PC-9 (cell line): ENCODE measurements at regions of chr11 and their contacts with region 1.

Region 1: GRCh38 chr11:62726915-62727763 is at the start of gene HNRNPUL2:
- DNase-seq: peak; percentile 98 to 99
- H3K4me3 ChIP-seq: peak within 1 kb of the TSS; percentile 84
- H3K27ac ChIP-seq: peak within 1 kb of the TSS; percentile 76
- H3K4me1 ChIP-seq: peaks cover 26% of the 10 kb centered on the region
- H3K27me3 ChIP-seq: no peaks in the 10 kb centered on the region
- CTCF ChIP-seq: no peak
- total RNA-seq, gene HNRNPUL2: 55.2 and 76.9 TPM in 2 replicates

Region 2: DNA sequence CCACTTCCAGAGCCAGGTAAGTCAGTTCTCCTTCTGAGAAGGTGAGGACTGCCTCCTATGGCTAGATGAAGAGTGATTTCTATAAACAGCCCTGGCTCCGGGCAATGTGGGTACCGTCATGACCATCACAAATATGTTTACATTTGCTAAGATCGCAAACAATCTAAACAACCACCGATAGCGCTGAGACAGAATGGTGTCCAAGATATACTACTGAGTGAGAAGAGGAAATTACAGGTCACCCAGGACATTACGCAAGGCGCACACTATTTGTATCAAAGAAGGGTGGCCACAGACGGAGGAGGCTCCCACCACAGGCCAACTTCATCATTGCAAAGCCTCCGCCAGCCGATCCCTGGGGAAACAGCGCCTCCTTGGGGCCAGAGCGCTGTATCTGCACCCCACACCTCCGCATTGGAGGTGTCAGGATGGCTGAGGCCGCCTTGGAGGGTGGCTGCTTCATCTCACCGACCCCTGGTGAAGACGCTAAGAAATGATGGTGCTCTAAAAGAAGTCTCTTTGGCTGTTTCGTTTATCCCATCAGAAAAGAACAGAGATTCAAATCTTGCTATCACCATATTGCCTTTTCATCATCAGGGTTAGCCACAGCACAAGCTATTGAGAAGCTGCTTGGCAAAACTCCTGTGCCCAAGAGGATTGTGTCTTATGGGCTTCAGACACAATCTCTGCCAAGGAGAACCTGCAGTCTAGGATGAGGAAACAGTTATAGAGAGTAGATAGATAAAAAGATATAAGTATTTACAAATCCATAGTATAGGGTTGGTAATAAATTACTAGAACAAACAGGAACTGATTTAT is 402.2 kb before region 1 on chr11:
- CTCF ChIA-PET with region 1: no interaction called
- POLR2A ChIA-PET with region 1: no interaction called
- intact Hi-C with region 1: no loop called
- DNase-seq: peak in 1 of 2 experiments; percentile 52
- H3K4me3 ChIP-seq: no peak overlapping the region
- H3K27ac ChIP-seq: no peak overlapping the region
- H3K4me1 ChIP-seq: no peaks in the 10 kb centered on the region
- H3K27me3 ChIP-seq: peaks cover 62% of the 10 kb centered on the region
- CTCF ChIP-seq: peak; percentile 72

Region 3: GRCh38 chr11:62542750-62543567 is 184.2 kb before region 1 on chr11:
- CTCF ChIA-PET with region 1: interaction called, 8 read pairs
- POLR2A ChIA-PET with region 1: no interaction called
- intact Hi-C with region 1: loop called (anchors 1 kb)
- DNase-seq: peak; percentile 76 to 90
- H3K4me3 ChIP-seq: peak overlapping the region; percentile 98
- H3K27ac ChIP-seq: peak overlapping the region; percentile 72
- H3K4me1 ChIP-seq: peaks cover 78% of the 10 kb centered on the region
- H3K27me3 ChIP-seq: no peaks in the 10 kb centered on the region
- CTCF ChIP-seq: peak; percentile 100

Region 4: DNA sequence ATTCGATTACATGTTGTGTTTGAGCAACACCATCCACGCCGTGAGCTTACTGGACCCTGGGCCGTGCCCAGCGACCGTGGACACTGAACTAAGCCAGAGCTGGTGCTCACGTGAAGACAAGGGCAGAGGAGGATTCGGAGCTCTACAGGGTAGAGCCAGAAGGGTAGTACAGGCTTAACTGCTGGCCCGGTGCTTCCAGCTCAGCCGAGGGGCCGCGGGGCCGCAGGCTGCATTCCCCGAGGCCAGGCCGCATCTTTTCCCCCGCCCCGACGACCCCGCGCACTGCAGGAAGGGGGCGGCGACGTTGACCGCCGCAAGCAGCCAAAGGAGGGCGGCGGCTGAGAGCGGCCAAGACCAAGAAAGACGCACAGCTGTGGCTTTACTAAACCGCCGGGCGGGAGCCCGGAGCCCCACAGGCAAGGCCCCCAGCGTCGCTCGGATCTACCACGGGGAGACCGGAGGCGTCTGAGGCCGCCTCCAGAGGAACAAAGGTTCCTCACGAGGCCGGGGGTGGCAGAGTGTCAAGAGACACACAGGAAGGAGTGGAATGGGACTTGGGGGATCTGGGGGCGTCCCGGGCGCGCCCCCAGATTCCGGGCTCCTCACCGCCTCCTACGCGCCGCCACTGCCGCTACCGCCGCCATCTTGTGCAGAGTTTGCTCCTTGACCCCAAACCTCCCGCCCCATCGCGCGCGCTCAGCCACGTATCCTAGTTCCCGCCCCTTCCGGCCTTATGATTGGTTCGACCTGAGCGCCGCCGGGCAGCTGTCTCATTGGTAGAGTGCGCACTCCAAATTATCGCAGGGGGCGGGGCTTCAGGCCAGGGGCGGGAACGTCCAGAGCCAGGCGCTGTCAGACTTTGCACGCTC is 80.9 kb before region 1 on chr11 and contains the start of gene GANAB:
- CTCF ChIA-PET with region 1: interaction called, 3 read pairs
- POLR2A ChIA-PET with region 1: interaction called, 13 read pairs
- intact Hi-C with region 1: no loop called
- DNase-seq: peak; percentile 95 to 98
- H3K4me3 ChIP-seq: peak within 1 kb of the TSS; percentile 99
- H3K27ac ChIP-seq: peak within 1 kb of the TSS; percentile 48
- H3K4me1 ChIP-seq: peaks cover 15% of the 10 kb centered on the region; the same call in 1 of the 2 replicates
- H3K27me3 ChIP-seq: no peaks in the 10 kb centered on the region
- CTCF ChIP-seq: no peak
- total RNA-seq, gene GANAB: 478 and 525 TPM in 2 replicates

Region 5: GRCh38 chr11:62737196-62737595 is 10.1 kb after region 1 on chr11:
- CTCF ChIA-PET with region 1: no interaction called
- POLR2A ChIA-PET with region 1: interaction called, 14 read pairs
- intact Hi-C with region 1: no loop called
- DNase-seq: no peak
- H3K4me3 ChIP-seq: no peak overlapping the region
- H3K27ac ChIP-seq: no peak overlapping the region
- H3K4me1 ChIP-seq: no peaks in the 10 kb centered on the region
- H3K27me3 ChIP-seq: no peaks in the 10 kb centered on the region
- CTCF ChIP-seq: no peak

Region 6: GRCh38 chr11:62787005-62787759 is 60.0 kb after region 1 on chr11 and contains the start of gene TMEM179B:
- CTCF ChIA-PET with region 1: interaction called, 4 read pairs
- POLR2A ChIA-PET with region 1: no interaction called
- intact Hi-C with region 1: loop called (anchors 5 kb)
- DNase-seq: peak; percentile 98
- H3K4me3 ChIP-seq: peak within 1 kb of the TSS; percentile 60
- H3K27ac ChIP-seq: peak within 1 kb of the TSS; percentile 74
- H3K4me1 ChIP-seq: peaks cover 32% of the 10 kb centered on the region
- H3K27me3 ChIP-seq: no peaks in the 10 kb centered on the region
- CTCF ChIP-seq: peak; percentile 29
- total RNA-seq, gene TMEM179B: 45.5 and 48.3 TPM in 2 replicates

Region 7: GRCh38 chr11:62855571-62856332 is 128.6 kb after region 1 on chr11:
- CTCF ChIA-PET with region 1: no interaction called
- POLR2A ChIA-PET with region 1: interaction called, 5 read pairs
- intact Hi-C with region 1: loop called (anchors 2 kb)
- DNase-seq: peak; percentile 98 to 99
- H3K4me3 ChIP-seq: peak overlapping the region; percentile 97
- H3K27ac ChIP-seq: peak overlapping the region; percentile 85
- H3K4me1 ChIP-seq: peaks cover 37% of the 10 kb centered on the region
- H3K27me3 ChIP-seq: no peaks in the 10 kb centered on the region
- CTCF ChIP-seq: no peak